ENCODE measurements at regions of chr3 and their contacts with region 1.

Region 1: GRCh38 chr3:170357176-170357919 is at the start of gene SKIL:
- DNase-seq: peak; percentile 98
- H3K4me3 Mint-ChIP-seq: peak within 1 kb of the TSS; percentile 79
- H3K27ac Mint-ChIP-seq: peak within 1 kb of the TSS; percentile 95
- H3K4me1 Mint-ChIP-seq: peaks cover 27% of the 10 kb centered on the region
- H3K27me3 Mint-ChIP-seq: peaks cover 7% of the 10 kb centered on the region
- total RNA-seq, gene SKIL: 23.3 TPM in 2 replicates

Region 2: DNA sequence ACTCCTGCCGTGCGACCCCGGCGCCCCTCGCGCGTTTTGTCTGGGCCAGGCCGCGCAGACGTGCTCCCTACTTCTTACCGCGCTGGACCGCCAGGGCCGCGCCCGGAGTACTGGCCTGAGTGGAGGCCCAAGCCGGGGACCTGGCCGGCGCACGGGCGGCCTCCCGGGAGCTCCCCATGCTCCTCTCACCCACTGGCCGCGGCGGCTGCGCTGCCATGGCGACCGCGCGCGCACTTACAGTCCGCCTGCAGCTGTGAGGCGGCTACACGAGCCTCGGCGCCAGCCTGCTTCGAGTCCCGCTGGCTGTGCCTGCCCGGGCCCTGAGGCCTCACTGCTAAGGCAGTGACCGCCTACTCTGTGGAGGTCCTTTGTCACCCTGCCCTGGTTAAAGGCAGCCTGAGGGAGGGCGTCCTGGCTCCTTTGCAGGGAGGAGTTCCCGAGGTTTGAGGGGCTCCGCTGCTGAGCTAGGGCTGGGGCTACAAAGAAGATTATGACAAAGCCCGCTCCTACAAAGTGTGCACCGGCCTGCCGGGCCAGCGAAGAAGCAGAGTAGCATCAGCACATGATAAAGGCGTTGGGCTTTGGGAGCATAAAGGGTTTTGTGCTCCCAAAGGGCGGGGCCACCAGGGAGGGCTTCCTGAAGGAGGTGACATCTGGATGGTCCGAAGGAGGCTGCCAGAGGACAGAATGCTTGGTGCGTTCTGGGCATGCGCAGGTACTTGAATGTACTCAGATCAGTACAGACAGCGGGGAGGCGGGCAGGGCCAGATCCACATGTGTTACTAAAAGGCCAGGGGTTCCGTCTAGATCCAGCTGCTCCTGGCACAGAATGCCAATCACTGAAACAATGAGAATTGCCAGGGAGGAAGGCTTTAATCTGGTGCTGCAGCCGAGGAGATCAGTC is 544.8 kb before region 1 on chr3 and contains the starts of genes LRRC34 and LRRIQ4:
- intact Hi-C with region 1: loop called (anchors 5 kb)
- DNase-seq: peak; percentile 91
- H3K4me3 Mint-ChIP-seq: peak within 1 kb of the TSS; percentile 92
- H3K27ac Mint-ChIP-seq: peak within 1 kb of the TSS; percentile 91
- H3K4me1 Mint-ChIP-seq: peaks cover 40% of the 10 kb centered on the region
- H3K27me3 Mint-ChIP-seq: peaks cover 14% of the 10 kb centered on the region
- total RNA-seq, gene LRRC34: 4.7 and 5.8 TPM in 2 replicates
- total RNA-seq, gene LRRIQ4: 0.09 and 0.21 TPM in 2 replicates

Region 3: GRCh38 chr3:170221924-170222646 is 135.3 kb before region 1 on chr3 and contains the start of gene PRKCI:
- intact Hi-C with region 1: loop called (anchors 1 kb)
- DNase-seq: peak; percentile 96
- H3K4me3 Mint-ChIP-seq: peak within 1 kb of the TSS; percentile 89
- H3K27ac Mint-ChIP-seq: peak within 1 kb of the TSS; percentile 94
- H3K4me1 Mint-ChIP-seq: peaks cover 23% of the 10 kb centered on the region
- H3K27me3 Mint-ChIP-seq: peaks cover 4% of the 10 kb centered on the region
- total RNA-seq, gene PRKCI: 19.7 and 32.3 TPM in 2 replicates

Region 4: GRCh38 chr3:170247875-170248274 is 109.5 kb before region 1 on chr3:
- intact Hi-C with region 1: no loop called
- DNase-seq: no peak
- H3K4me3 Mint-ChIP-seq: no peak overlapping the region
- H3K27ac Mint-ChIP-seq: peak overlapping the region; percentile 41
- H3K4me1 Mint-ChIP-seq: peaks cover 9% of the 10 kb centered on the region
- H3K27me3 Mint-ChIP-seq: no peaks in the 10 kb centered on the region

Region 5: GRCh38 chr3:170277833-170278580 is 79.3 kb before region 1 on chr3:
- intact Hi-C with region 1: loop called (anchors 1 kb)
- DNase-seq: no peak
- H3K4me3 Mint-ChIP-seq: peak overlapping the region; percentile 81
- H3K27ac Mint-ChIP-seq: peak overlapping the region; percentile 82
- H3K4me1 Mint-ChIP-seq: peaks cover 19% of the 10 kb centered on the region
- H3K27me3 Mint-ChIP-seq: no peaks in the 10 kb centered on the region

Region 6: DNA sequence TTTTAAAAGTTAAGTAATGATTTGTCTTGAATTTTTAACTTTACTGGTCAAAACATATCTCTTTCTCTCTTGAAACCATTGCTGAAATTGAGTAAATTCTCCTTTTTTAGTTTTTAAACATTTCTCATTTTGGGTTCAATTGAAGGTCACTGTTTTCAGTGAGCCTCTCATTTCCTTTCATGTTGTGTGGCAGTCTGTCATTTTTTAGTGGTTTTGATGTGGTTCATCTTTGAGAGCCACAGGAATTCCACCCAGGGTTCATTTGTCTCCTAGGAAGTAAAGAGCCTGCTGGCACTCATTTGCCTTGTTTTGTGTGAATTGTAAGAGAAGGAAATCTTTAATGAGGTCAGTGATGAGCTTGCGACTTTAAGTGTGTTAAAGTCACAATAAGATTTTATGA is 71.7 kb after region 1 on chr3:
- intact Hi-C with region 1: no loop called
- DNase-seq: no peak
- H3K4me3 Mint-ChIP-seq: no peak overlapping the region
- H3K27ac Mint-ChIP-seq: no peak overlapping the region
- H3K4me1 Mint-ChIP-seq: peaks cover 11% of the 10 kb centered on the region
- H3K27me3 Mint-ChIP-seq: peaks cover 7% of the 10 kb centered on the region